ENCODE measurements at regions of chr5 and their contacts with region 1.

Region 1: DNA sequence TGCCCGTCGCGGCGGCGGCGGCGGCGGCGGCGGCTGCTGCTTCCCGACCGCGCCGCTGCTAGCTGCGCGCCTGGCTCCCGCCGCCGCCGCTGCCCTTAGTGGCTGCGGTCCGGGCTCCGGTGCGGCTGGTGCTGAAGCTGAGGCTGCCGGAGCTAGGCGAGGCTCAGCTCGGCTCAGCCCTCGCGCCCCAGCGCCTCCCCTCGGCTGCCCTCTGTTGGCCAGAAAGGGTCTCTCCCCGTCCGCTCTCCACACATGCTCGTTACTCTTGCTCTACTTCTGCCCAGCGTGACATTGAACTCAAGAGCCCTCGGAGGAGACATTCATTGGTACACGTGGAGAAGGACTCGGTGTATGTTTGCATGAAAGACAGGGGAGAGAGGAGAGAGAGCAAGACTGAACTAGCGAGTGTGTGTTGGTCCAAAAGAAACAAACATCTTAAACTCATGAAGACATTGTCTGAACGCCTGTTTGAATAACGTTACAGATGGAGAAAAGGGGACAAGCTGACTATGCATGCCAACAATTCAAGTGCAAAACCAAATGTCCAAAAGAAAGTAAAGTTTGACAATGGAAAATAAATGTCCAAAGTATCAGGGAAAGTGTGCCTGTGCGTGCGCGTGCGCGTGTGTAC is at the start of gene HCN1:
- DNase-seq: peak; percentile 88
- ATAC-seq: peak; percentile 98
- total RNA-seq, gene HCN1: 37.3 TPM

Region 2: DNA sequence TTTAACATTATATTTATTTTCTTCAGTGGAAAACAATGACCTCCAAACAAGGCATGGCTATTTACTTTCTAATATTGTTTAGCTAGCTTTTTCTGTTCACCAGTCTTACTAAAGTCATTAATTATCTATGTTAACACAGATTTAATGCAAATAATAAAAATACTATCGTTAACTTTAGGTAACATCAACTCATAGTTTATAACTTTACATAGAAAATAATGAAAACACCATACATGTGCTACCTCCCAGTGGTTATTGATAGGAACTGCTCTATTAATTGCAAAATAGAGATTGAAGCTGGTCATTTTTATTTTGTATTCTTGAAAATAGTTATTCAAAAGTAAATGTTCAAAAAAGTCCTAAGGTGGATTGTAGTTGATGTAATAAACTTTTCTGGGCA is 78.2 kb after region 1 on chr5:
- intact Hi-C with region 1: loop called (anchors 10 kb)
- DNase-seq: no peak
- ATAC-seq: no peak

Region 3: DNA sequence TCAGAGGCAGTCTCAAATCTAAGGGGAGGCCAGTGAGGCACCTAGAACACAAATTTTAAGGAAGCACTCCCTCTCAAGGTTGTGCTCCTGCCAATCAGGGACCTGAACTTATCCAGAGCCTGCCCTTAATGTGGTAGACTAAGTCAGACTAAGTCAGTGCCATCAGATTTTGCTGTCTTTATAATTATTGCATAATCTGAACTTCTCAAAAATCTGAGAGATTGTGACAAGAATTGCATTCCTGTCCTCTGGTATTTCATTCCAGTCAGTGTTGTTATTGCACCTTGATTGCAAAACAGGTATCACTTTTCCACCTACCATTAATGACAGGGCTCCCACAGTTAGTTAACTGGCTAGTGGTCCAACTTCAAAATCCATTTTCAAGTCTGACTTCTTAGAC is 197.0 kb after region 1 on chr5:
- intact Hi-C with region 1: no loop called
- DNase-seq: no peak
- ATAC-seq: no peak

Measured in sciatic nerve (tissue), 2 donors.